B cell (primary cell): ENCODE measurements at regions of chr2 and their contacts with region 1.

Region 1: DNA sequence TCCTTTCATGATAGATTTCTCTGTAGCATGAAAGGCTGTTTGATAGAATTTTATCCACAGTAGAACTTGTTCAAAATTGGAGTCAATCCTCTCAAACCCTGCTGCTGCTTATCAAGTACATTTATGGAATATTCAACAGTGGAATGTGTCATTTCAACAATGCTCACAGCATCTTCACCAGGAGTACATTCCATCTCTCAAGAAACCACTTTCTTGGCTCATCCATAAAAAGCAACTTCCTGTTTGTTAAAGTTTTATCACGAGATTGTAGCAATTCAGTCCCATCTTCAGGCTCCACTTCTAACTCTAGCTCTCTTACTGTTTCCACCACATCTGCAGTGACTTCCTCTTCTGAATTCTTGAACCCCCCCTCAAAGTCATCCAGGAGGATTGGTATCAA is 29.4 kb downstream of the PDCL3 start:
- DNase-seq: no peak
- ATAC-seq: no peak
- H3K4me3 ChIP-seq: no peak overlapping the region
- H3K4me3 Mint-ChIP-seq: no peak overlapping the region
- H3K27ac ChIP-seq: no peak overlapping the region
- H3K27ac Mint-ChIP-seq: no peak overlapping the region
- H3K4me1 ChIP-seq: no peaks in the 10 kb centered on the region
- H3K4me1 Mint-ChIP-seq: peaks cover 16% of the 10 kb centered on the region
- H3K27me3 ChIP-seq: no peaks in the 10 kb centered on the region
- H3K27me3 Mint-ChIP-seq: no peaks in the 10 kb centered on the region
- CTCF ChIP-seq: no peak

Region 2: DNA sequence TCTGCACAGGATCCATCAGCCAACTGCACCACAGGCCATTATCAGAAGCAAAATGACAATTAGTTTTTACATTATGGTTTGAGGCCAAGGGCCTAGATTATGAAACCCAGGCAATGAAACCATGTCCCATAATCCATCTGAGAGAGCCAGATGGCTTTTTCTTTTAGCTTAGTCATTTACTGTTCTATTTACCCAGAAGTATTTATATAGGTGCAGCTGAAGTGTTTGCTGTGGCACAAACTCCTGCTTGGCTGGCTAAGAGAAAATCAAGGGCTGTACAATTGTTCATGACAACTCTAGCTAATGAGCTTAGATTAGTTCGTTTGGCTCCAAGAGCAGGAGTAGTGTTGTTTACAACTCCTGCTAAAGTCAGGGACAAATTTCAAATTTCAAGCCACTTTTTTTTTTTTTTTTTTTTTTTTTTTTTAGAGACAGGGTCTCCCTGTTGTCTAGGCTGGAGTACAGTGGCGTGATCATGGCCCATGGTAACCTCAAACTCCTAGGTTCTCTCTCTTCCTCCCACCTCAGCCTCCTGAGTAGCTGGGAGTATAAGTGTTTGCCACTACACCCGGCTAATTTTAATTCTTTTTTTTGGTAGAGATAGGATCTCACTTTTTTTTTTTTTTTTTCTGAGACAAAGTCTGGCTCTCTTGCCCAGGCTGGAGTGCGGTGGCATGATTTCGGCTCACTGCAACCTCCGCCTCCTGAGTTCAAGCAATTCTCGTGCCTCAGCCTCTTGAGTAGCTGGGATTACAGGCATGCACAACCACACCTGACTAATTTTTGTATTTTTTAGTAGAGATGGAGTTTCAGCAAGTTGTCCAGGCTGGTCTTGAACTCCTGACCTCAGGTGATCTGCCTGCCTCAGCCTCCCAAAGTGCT is 1084.0 kb before region 1 on chr2:
- CTCF ChIA-PET with region 1: no interaction called
- POLR2A ChIA-PET with region 1: interaction called, 17 read pairs
- intact Hi-C with region 1: no loop called
- DNase-seq: no peak
- ATAC-seq: no peak
- H3K4me3 ChIP-seq: no peak overlapping the region
- H3K4me3 Mint-ChIP-seq: no peak overlapping the region
- H3K27ac ChIP-seq: no peak overlapping the region
- H3K27ac Mint-ChIP-seq: no peak overlapping the region
- H3K4me1 ChIP-seq: peaks cover 3 to 10% of the 10 kb centered on the region in 2 donors
- H3K4me1 Mint-ChIP-seq: peaks cover 19% of the 10 kb centered on the region
- H3K27me3 ChIP-seq: no peaks in the 10 kb centered on the region
- H3K27me3 Mint-ChIP-seq: no peaks in the 10 kb centered on the region
- CTCF ChIP-seq: no peak

Region 3: DNA sequence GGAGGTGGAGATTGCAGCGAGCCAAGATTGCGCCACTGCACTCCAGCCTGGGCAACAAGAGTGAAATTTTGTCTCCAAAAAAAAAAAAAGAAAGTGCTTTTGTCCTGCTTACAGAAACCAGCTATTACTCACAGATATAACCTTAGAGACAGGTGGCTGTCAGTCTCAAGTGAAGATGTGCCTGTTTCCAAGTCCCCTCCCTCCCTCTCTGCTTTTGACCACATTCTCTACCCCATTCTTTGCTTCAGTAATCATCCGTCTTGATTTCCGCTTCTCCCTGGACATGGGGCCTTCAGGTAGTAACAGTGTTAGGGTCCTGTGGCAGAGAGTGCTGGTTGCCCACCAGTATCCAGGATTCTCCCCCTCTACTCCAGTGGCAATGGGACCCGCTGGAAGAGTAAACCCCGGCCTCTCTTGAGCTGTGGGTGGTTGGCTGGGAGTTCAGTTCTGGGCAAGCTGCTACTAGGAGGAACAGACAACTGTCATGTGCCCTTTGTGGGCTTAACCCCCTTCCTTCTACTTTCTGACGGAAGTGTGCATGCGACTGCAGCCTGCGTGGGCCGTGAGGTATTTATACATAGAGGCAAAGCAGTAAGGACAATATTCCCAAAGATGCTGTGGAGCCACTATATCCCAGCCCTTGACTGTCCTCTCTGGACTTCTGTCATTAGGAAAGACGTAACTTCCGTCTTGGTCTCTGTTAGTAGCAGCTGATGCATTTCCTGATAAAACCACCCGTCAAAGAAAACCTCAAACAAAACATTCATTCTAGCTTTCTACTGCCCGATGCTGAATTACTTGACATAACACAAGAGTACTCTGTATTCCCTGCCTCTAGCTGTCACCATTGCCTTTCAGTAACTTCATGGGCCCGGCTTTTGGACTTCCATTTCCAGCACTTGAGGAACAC is 11.6 kb before region 1 on chr2:
- CTCF ChIA-PET with region 1: interaction called, 30 read pairs
- POLR2A ChIA-PET with region 1: interaction called, 4 read pairs
- intact Hi-C with region 1: no loop called
- DNase-seq: peak; percentile 87
- ATAC-seq: peak; percentile 78
- H3K4me3 ChIP-seq: peak overlapping the region in 4 of 5 experiments; percentile 0 to 36 (median 20)
- H3K4me3 Mint-ChIP-seq: peak overlapping the region; percentile 78
- H3K27ac ChIP-seq: peak overlapping the region; percentile 91 to 95
- H3K27ac Mint-ChIP-seq: peak overlapping the region; percentile 99
- H3K4me1 ChIP-seq: peaks cover 18 to 20% of the 10 kb centered on the region in 2 donors
- H3K4me1 Mint-ChIP-seq: peaks cover 25% of the 10 kb centered on the region
- H3K27me3 ChIP-seq: no peaks in the 10 kb centered on the region
- H3K27me3 Mint-ChIP-seq: no peaks in the 10 kb centered on the region
- CTCF ChIP-seq: no peak

Region 4: GRCh38 chr2:100610381-100610831 is 18.2 kb after region 1 on chr2:
- CTCF ChIA-PET with region 1: interaction called, 53 read pairs
- POLR2A ChIA-PET with region 1: no interaction called
- intact Hi-C with region 1: no loop called
- DNase-seq: peak; percentile 44
- ATAC-seq: no peak
- H3K4me3 ChIP-seq: no peak overlapping the region
- H3K4me3 Mint-ChIP-seq: no peak overlapping the region
- H3K27ac ChIP-seq: no peak overlapping the region
- H3K27ac Mint-ChIP-seq: no peak overlapping the region
- H3K4me1 ChIP-seq: no peaks in the 10 kb centered on the region
- H3K4me1 Mint-ChIP-seq: peaks cover 1% of the 10 kb centered on the region
- H3K27me3 ChIP-seq: peaks cover 0 to 5% (median 0%) of the 10 kb centered on the region in 4 experiments
- H3K27me3 Mint-ChIP-seq: peaks cover 29% of the 10 kb centered on the region
- CTCF ChIP-seq: peak; percentile 53

Region 5: GRCh38 chr2:100984892-100985379 is 392.7 kb after region 1 on chr2:
- CTCF ChIA-PET with region 1: interaction called, 42 read pairs
- POLR2A ChIA-PET with region 1: no interaction called
- intact Hi-C with region 1: loop called (anchors 1 kb)
- DNase-seq: peak; percentile 83
- ATAC-seq: peak; percentile 81
- H3K4me3 ChIP-seq: no peak overlapping the region
- H3K4me3 Mint-ChIP-seq: no peak overlapping the region
- H3K27ac ChIP-seq: no peak overlapping the region
- H3K27ac Mint-ChIP-seq: no peak overlapping the region
- H3K4me1 ChIP-seq: no peaks in the 10 kb centered on the region
- H3K4me1 Mint-ChIP-seq: no peaks in the 10 kb centered on the region
- H3K27me3 ChIP-seq: peaks cover 0 to 4% (median 3%) of the 10 kb centered on the region in 4 experiments
- H3K27me3 Mint-ChIP-seq: peaks cover 13% of the 10 kb centered on the region
- CTCF ChIP-seq: peak; percentile 93